Left cardiac atrium (tissue), 4 donors: ENCODE measurements at regions of chr1 and their contacts with region 1.

Region 1: DNA sequence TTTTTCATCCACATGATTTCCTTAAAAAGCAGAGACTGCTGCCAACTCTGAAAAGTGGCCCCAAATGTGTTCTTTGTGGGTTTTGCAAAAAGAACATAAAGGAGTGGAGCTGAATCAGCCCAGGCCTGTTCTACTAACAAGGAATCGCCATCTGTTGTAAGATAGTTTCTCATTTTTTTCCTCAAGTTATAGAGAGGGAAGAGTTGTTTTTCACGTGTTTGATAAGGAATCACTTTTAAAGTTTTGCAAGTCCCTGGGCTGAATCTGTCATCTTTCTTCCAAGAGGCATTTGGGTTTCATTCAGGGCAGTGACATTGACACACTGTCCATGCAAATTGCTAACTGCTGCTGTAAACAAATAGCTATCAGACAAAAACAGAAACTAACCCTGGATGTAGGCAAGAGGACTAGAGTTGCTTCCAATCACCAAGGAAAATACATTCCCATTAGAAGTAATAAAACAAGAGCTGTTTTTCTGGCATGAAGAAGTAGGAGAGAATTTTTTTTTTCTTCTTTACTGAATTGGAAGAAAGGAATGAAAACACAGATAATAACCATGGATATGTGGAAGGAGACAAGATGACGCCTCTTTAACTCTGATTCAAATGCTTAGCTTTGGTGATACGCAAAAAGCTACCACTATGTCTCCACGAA is 58.8 kb upstream of the TBX15 start:
- DNase-seq: no peak
- ATAC-seq: peak; percentile 69 to 91

Region 2: GRCh38 chr1:118987468-118988185 is 59.3 kb before region 1 on chr1:
- intact Hi-C with region 1: no loop called
- DNase-seq: no peak
- ATAC-seq: peak; percentile 70 to 72

Region 3: GRCh38 chr1:119080586-119080985 is 33.7 kb after region 1 on chr1:
- intact Hi-C with region 1: no loop called
- DNase-seq: peak; percentile 22
- ATAC-seq: peak in 1 of 2 donors; percentile 89

Region 4: GRCh38 chr1:119140177-119141019 is 93.5 kb after region 1 on chr1 and contains the start of gene WARS2:
- intact Hi-C with region 1: loop called in 1 of 2 experiments (anchors 10 kb)
- DNase-seq: peak; percentile 96
- ATAC-seq: peak; percentile 98 to 99
- total RNA-seq, gene WARS2: 11.1 to 11.4 TPM